IMR-90 (cell line): ENCODE measurements at regions of chr15 and their contacts with region 1.

Region 1: GRCh38 chr15:89888214-89888804 is 5.5 kb downstream of the AP3S2 start:
- DNase-seq: peak; percentile 90
- ATAC-seq: peak; percentile 93
- H3K4me3 ChIP-seq: no peak overlapping the region
- H3K27ac ChIP-seq: no peak overlapping the region
- H3K4me1 ChIP-seq: no peaks in the 10 kb centered on the region
- H3K27me3 ChIP-seq: no peaks in the 10 kb centered on the region
- CTCF ChIP-seq: peak; percentile 71
- POLR2A ChIP-seq: no peak
- RAD21 ChIP-seq: peak; percentile 83

Region 2: GRCh38 chr15:89693686-89694085 is 194.6 kb before region 1 on chr15:
- CTCF ChIA-PET with region 1: interaction called, 10 read pairs
- POLR2A ChIA-PET with region 1: no interaction called
- dilution Hi-C with region 1: no loop called
- in situ Hi-C with region 1: no loop called
- intact Hi-C with region 1: no loop called
- DNase-seq: no peak
- ATAC-seq: no peak
- H3K4me3 ChIP-seq: no peak overlapping the region
- H3K27ac ChIP-seq: no peak overlapping the region
- H3K4me1 ChIP-seq: peaks cover 2% of the 10 kb centered on the region; the same call in 1 of the 2 replicates
- H3K27me3 ChIP-seq: peaks cover 9% of the 10 kb centered on the region
- CTCF ChIP-seq: no peak
- POLR2A ChIP-seq: no peak
- RAD21 ChIP-seq: no peak

Region 3: GRCh38 chr15:89704411-89704810 is 183.9 kb before region 1 on chr15:
- CTCF ChIA-PET with region 1: no interaction called
- POLR2A ChIA-PET with region 1: no interaction called
- dilution Hi-C with region 1: no loop called
- in situ Hi-C with region 1: no loop called
- intact Hi-C with region 1: no loop called
- DNase-seq: peak; percentile 1
- ATAC-seq: no peak
- H3K4me3 ChIP-seq: no peak overlapping the region
- H3K27ac ChIP-seq: no peak overlapping the region
- H3K4me1 ChIP-seq: no peaks in the 10 kb centered on the region
- H3K27me3 ChIP-seq: peaks cover 47% of the 10 kb centered on the region
- CTCF ChIP-seq: no peak
- POLR2A ChIP-seq: no peak
- RAD21 ChIP-seq: no peak

Region 4: DNA sequence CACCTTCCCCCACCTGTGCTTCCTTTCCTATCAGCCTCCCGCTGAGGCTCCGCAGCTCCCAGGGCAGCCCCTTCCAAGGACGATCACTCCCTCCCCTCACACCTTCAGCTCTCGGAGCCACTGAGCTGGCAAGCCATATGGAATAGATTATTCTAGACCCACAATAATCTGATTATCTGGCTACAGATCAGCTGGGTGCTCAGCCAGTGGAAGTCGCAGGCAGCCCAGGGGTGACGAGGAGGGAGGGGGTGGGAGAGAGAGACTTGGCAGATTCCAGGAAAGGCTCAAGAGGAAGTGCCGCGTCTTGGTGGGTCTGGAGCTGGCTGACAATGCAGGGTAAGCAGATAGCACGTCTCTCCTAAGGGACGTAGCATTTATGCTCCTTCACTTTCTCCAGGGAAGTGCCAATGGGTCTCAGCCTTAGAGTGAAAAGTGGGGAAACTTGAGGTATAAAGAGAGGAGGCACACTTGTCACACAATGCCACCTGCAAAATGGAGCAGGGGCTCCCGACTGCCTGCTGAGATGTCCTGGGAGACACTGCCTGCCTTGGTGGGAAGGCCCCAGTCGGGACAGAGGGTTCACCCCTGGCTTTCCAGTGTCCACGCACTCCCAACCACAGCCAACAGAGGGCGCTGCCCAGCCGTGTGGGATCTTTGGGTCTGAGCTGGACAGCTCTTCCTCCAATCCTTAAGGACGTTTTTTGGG is 127.9 kb before region 1 on chr15:
- CTCF ChIA-PET with region 1: interaction called, 27 read pairs
- POLR2A ChIA-PET with region 1: no interaction called
- dilution Hi-C with region 1: no loop called
- in situ Hi-C with region 1: no loop called
- intact Hi-C with region 1: loop called (anchors 1 kb)
- DNase-seq: peak; percentile 57
- ATAC-seq: peak; percentile 100
- H3K4me3 ChIP-seq: no peak overlapping the region
- H3K27ac ChIP-seq: no peak overlapping the region
- H3K4me1 ChIP-seq: no peaks in the 10 kb centered on the region
- H3K27me3 ChIP-seq: no peaks in the 10 kb centered on the region
- CTCF ChIP-seq: peak; percentile 99
- POLR2A ChIP-seq: 0 out of 2 replicates have a peak, but pooled peaks have one; percentile 42
- RAD21 ChIP-seq: peak; percentile 96